GM12878 (cell line): ENCODE measurements at regions of chr12 and their contacts with region 1.

Region 1: DNA sequence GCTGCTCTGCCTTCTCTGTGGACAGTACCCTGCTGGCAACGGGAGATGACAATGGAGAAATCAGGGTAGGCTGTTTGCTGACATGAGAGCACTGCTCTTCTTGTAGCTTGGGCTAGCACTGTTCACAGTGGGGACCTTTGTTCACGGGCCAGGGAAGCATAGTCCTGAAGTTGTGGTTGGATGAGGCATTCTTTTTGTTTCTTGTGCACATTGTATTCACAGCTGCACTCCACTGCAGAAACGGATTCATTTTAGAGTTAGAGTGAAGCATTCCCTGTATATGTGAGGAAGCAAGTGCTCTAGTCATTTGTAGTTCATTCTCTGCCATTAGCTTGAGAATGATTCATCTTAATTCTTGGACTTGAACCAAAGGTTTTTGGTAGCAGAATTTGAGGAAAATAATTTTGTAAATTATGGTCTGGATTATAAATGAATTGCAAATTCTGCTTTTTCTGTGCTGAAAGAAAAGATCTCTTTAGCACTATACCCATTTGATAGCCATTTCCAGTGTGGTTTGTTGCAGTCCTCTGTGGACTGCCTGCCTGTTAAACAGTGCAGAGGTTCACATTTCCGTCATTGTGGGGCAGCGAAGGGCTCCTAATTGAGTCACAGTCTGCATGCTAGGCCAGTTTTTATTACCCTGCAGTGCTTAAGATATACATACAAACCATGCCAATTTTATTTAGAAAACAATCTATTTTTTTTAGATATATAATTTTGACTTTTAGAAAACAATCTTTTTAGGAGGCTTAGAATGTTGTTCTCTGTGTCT is 80.6 kb downstream of the APAF1 start:
- DNase-seq: no peak
- ATAC-seq: peak; percentile 96
- H3K4me3 ChIP-seq: no peak overlapping the region
- H3K27ac ChIP-seq: no peak overlapping the region
- H3K4me1 ChIP-seq: no peaks in the 10 kb centered on the region
- H3K27me3 ChIP-seq: no peaks in the 10 kb centered on the region
- CTCF ChIP-seq: peak; percentile 46 to 48 (median 47); a peak in 5 of 6 replicates
- EP300 ChIP-seq: no peak
- POLR2A ChIP-seq: no peak
- RAD21 ChIP-seq: peak; percentile 59

Region 2: GRCh38 chr12:98587084-98587483 is 138.6 kb before region 1 on chr12:
- CTCF ChIA-PET with region 1: no interaction called
- POLR2A ChIA-PET with region 1: no interaction called
- RAD21 ChIA-PET with region 1: no interaction called
- SMC1A ChIA-PET with region 1: no interaction called
- in situ Hi-C with region 1: no loop called
- intact Hi-C with region 1: no loop called
- DNase-seq: no peak
- ATAC-seq: no peak
- H3K4me3 ChIP-seq: no peak overlapping the region
- H3K27ac ChIP-seq: no peak overlapping the region
- H3K4me1 ChIP-seq: no peaks in the 10 kb centered on the region
- H3K27me3 ChIP-seq: no peaks in the 10 kb centered on the region
- CTCF ChIP-seq: no peak
- EP300 ChIP-seq: no peak
- POLR2A ChIP-seq: no peak
- RAD21 ChIP-seq: no peak

Region 3: GRCh38 chr12:98612696-98613334 is 112.8 kb before region 1 on chr12:
- CTCF ChIA-PET with region 1: no interaction called
- POLR2A ChIA-PET with region 1: no interaction called
- RAD21 ChIA-PET with region 1: no interaction called
- SMC1A ChIA-PET with region 1: no interaction called
- in situ Hi-C with region 1: no loop called
- intact Hi-C with region 1: no loop called
- DNase-seq: peak; percentile 38
- ATAC-seq: peak; percentile 94
- H3K4me3 ChIP-seq: no peak overlapping the region
- H3K27ac ChIP-seq: peak overlapping the region; percentile 49
- H3K4me1 ChIP-seq: peaks cover 7% of the 10 kb centered on the region; the same call in 1 of the 2 replicates
- H3K27me3 ChIP-seq: no peaks in the 10 kb centered on the region
- CTCF ChIP-seq: 0 out of 6 replicates have a peak, but pooled peaks of 1 of the 3 experiments have one; percentile 8
- EP300 ChIP-seq: no peak
- POLR2A ChIP-seq: no peak
- RAD21 ChIP-seq: no peak

Region 4: GRCh38 chr12:98799146-98799810 is 73.6 kb after region 1 on chr12:
- CTCF ChIA-PET with region 1: interaction called, 12 read pairs
- POLR2A ChIA-PET with region 1: no interaction called
- RAD21 ChIA-PET with region 1: interaction called, 3 read pairs
- SMC1A ChIA-PET with region 1: interaction called, 3 read pairs
- in situ Hi-C with region 1: no loop called
- intact Hi-C with region 1: no loop called
- DNase-seq: no peak
- ATAC-seq: no peak
- H3K4me3 ChIP-seq: no peak overlapping the region
- H3K27ac ChIP-seq: no peak overlapping the region
- H3K4me1 ChIP-seq: no peaks in the 10 kb centered on the region
- H3K27me3 ChIP-seq: 0 out of 4 replicates have a peak, but pooled peaks cover 0 to 2% of the 10 kb centered on the region in 2 experiments
- CTCF ChIP-seq: peak in 1 of 3 experiments; percentile 11; a peak in 1 of 6 replicates
- EP300 ChIP-seq: no peak
- POLR2A ChIP-seq: no peak
- RAD21 ChIP-seq: no peak